Heart left ventricle (tissue), 16 donors: ENCODE measurements at regions of chr22 and their contacts with region 1.

Region 1: DNA sequence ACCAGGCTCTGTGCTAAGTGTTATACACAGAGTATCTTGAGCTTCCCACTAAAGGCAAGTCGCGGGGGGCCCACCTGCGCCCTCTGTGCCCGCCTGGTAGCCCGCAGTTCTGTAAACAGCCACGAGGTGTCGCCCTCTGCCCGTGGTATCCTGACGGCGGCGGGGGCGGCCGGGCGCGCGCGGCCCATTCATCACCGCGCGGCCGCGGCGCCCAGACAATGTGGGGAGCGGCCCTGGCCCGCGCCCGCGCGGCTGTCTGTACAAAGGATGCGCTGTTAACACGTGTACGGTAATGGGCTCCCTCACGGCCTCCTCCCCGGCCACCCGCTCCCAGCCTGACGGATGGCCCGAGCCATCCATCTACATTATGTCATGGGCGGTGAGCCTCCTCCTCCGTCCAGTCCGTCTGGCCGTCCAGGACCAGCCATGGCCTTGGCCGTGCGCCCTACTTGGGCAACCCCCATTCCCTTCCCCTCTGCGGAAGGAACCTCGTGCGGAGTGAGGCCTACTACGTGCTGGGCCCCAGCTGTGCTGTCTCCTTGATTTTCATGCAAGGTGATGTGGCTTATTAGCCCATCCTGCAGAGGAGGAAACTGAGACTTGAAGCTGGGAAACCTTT is 99.4 kb downstream of the MIAT start:
- DNase-seq: peak; percentile 50 to 79 (median 67)
- ATAC-seq: peak; percentile 53 to 93 (median 83)
- H3K4me3 ChIP-seq: peak overlapping the region in 10 of 12 donors; percentile 8 to 42 (median 37)
- H3K27ac ChIP-seq: no peak overlapping the region
- H3K4me1 ChIP-seq: peaks cover 0 to 7% (median 0%) of the 10 kb centered on the region in 12 donors
- H3K27me3 ChIP-seq: no peaks in the 10 kb centered on the region
- CTCF ChIP-seq: peak; percentile 82 to 98 (median 92)
- POLR2A ChIP-seq: no peak

Region 2: DNA sequence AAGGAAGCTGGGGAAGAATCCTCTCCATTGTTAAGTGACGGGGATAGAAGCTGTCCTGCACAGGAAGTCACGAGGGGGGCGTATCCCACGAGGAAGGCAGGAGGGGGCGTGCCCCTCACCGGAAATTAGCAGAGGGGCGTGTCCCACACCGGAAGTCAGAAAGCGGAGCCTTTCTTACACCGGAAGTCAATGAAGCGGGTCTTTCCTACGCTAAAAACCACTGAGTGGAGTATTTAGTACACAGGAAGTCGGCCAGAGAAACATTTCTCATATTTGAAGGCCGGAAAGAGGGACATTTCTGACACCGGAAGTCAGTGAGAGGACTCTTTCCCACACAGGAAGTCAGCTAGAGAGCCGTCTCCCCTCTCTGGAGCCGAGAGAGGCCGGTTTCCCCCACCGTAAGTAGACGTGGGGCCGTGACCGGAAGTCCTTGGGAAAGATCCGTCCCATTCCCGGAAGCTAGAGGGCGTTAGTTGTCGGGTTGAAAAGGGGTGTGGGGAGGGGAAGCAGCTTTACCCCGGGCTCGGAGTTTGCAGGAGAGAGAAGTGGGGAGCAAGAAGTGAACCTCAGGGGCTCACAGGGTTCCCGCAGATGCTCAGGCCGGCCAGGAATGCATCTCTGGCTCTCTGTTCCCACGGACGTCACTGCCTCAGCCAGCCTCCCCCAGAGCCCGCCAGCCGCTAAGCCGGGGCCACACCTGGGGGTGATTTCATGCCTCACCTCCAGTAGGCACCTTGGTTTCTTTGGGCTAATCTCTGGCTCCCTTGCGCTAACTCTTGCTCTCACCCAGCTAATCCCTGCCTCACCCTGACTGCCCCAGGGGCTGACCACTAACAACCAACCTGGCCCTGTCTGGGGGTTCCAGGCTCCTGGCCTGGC is 84.0 kb before region 1 on chr22:
- intact Hi-C with region 1: loop called in 2 of 10 experiments (anchors 5 to 10 kb)
- DNase-seq: peak; percentile 92 to 95 (median 94)
- ATAC-seq: peak; percentile 92 to 96 (median 93)
- H3K4me3 ChIP-seq: peak overlapping the region; percentile 40 to 92 (median 78)
- H3K27ac ChIP-seq: peak overlapping the region; percentile 92 to 100 (median 96)
- H3K4me1 ChIP-seq: peaks cover 0 to 49% (median 24%) of the 10 kb centered on the region in 12 donors
- H3K27me3 ChIP-seq: no peaks in the 10 kb centered on the region
- CTCF ChIP-seq: peak; percentile 31 to 80 (median 56)
- POLR2A ChIP-seq: peak in 1 of 2 donors; percentile 11

Region 3: DNA sequence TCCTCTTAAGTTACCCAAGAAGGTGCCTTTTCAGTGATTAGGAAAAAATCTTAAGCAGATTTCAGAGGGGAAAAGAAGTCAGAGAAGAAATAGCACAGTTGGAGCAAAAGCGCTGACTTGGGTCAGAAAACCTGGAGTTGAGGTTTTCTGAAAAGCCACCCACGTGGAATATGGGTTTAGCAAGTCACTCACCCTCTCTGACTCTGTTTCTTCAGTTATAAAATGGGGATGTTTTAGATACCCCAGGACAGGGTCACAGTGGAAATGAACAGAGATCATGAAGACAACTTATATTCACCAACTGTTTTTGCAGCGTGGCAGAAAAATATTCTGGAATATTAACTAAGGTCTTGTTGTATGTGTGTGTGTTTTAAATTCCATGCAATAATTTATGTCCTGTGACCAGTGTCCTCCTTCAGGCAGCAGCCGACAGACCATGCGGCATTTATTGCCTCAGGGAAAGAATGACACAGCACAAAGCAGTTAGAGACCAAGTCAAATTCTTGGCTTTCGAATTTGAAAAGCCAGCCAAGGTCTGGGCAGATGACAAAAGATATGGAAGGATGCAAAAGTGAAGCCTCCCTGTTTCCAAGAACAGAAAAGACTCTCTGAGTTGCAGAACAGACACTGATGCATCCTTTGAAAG is 20.5 kb after region 1 on chr22:
- intact Hi-C with region 1: no loop called
- DNase-seq: no peak
- ATAC-seq: peak; percentile 60 to 87 (median 80)
- H3K4me3 ChIP-seq: no peak overlapping the region
- H3K27ac ChIP-seq: peak overlapping the region in 2 of 12 donors; percentile 15 to 58
- H3K4me1 ChIP-seq: peaks cover 0 to 17% (median 5%) of the 10 kb centered on the region in 12 donors
- H3K27me3 ChIP-seq: no peaks in the 10 kb centered on the region
- CTCF ChIP-seq: no peak
- POLR2A ChIP-seq: no peak

Region 4: GRCh38 chr22:27331526-27332281 is 574.9 kb after region 1 on chr22:
- intact Hi-C with region 1: loop called in 3 of 10 experiments (anchors 10 kb)
- DNase-seq: peak in 3 of 5 donors; percentile 25 to 70 (median 56)
- ATAC-seq: peak; percentile 72 to 96 (median 88)
- H3K4me3 ChIP-seq: no peak overlapping the region
- H3K27ac ChIP-seq: no peak overlapping the region
- H3K4me1 ChIP-seq: peaks cover 0 to 8% (median 0%) of the 10 kb centered on the region in 12 donors
- H3K27me3 ChIP-seq: peaks cover 0 to 43% (median 10%) of the 10 kb centered on the region in 9 donors
- CTCF ChIP-seq: peak in 11 of 12 donors; percentile 4 to 53 (median 33)
- POLR2A ChIP-seq: no peak

Region 5: DNA sequence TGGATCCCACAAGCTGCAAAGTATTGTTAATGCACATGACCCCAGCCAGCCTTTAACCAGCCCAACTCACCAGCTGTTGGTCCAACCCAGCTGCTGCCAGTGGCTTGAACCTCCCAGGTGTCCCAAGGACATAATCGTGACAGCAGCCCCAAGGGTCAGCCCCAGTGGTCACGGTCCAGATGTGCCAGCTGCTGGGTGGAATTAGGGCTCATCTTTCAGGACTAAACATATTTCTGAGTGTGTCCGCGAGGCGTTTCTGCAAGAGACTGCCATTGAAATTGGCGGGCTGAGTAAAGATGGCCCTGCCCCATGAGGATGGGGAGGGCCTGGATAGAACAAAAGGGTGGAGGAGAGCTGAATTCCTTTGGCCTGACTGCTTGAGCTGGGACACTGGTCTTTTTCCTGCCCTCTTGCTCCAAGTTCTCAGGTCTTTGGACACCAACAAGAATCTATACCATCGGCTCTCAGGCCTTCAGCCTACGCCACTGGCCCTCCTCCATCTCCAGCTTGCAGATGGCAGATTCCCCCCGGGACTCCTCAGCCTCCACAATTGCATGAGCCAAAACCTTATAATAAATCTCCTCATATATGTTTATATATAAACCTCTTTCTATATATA is 804.6 kb after region 1 on chr22:
- intact Hi-C with region 1: loop called in 1 of 10 experiments (anchors 10 kb)
- DNase-seq: no peak
- ATAC-seq: peak in 1 of 4 donors; percentile 30
- H3K4me3 ChIP-seq: no peak overlapping the region
- H3K27ac ChIP-seq: no peak overlapping the region
- H3K4me1 ChIP-seq: no peaks in the 10 kb centered on the region
- H3K27me3 ChIP-seq: no peaks in the 10 kb centered on the region
- CTCF ChIP-seq: no peak
- POLR2A ChIP-seq: no peak

Region 6: GRCh38 chr22:28009272-28009827 is 1252.6 kb after region 1 on chr22:
- intact Hi-C with region 1: loop called in 6 of 10 experiments (anchors 2 to 10 kb)
- DNase-seq: peak; percentile 69 to 81 (median 75)
- ATAC-seq: peak; percentile 58 to 81 (median 73)
- H3K4me3 ChIP-seq: no peak overlapping the region
- H3K27ac ChIP-seq: no peak overlapping the region
- H3K4me1 ChIP-seq: peaks cover 0 to 23% (median 7%) of the 10 kb centered on the region in 12 donors
- H3K27me3 ChIP-seq: no peaks in the 10 kb centered on the region
- CTCF ChIP-seq: peak; percentile 91 to 100 (median 96)
- POLR2A ChIP-seq: no peak